Ascending aorta (tissue), 2 donors: ENCODE measurements at regions of chr2 and their contacts with region 1.

Region 1: GRCh38 chr2:202911512-202912341 is at the starts of genes CARF and WDR12:
- DNase-seq: peak; percentile 61 to 95
- H3K4me3 ChIP-seq: peak within 1 kb of the TSS; percentile 64 to 69
- H3K27ac ChIP-seq: peak within 1 kb of the TSS; percentile 82
- H3K4me1 ChIP-seq: peaks cover 0 to 11% of the 10 kb centered on the region in 2 donors
- H3K27me3 ChIP-seq: no peaks in the 10 kb centered on the region
- CTCF ChIP-seq: no peak
- total RNA-seq, gene CARF: 26.2 TPM
- total RNA-seq, gene WDR12: 2.1 TPM

Region 2: GRCh38 chr2:202950592-202950991 is 38.9 kb after region 1 on chr2:
- intact Hi-C with region 1: no loop called
- DNase-seq: no peak
- H3K4me3 ChIP-seq: no peak overlapping the region
- H3K27ac ChIP-seq: no peak overlapping the region
- H3K4me1 ChIP-seq: no peaks in the 10 kb centered on the region
- H3K27me3 ChIP-seq: no peaks in the 10 kb centered on the region
- CTCF ChIP-seq: no peak

Region 3: GRCh38 chr2:203238704-203239526 is 327.2 kb after region 1 on chr2 and contains the start of gene CYP20A1:
- intact Hi-C with region 1: loop called (anchors 2 kb)
- DNase-seq: peak; percentile 82 to 98
- H3K4me3 ChIP-seq: peak within 1 kb of the TSS; percentile 51 to 72
- H3K27ac ChIP-seq: peak within 1 kb of the TSS; percentile 94 to 96
- H3K4me1 ChIP-seq: peaks cover 0 to 16% of the 10 kb centered on the region in 2 donors
- H3K27me3 ChIP-seq: no peaks in the 10 kb centered on the region
- CTCF ChIP-seq: peak in 2 of 3 experiments; percentile 21 to 40
- total RNA-seq, gene CYP20A1: 13.6 TPM